ENCODE measurements at regions of chr18 and their contacts with region 1.

Region 1: GRCh38 chr18:7812431-7813063 is 245.4 kb downstream of the PTPRM start:
- DNase-seq: no peak
- ATAC-seq: peak; percentile 66 to 78 (median 72)
- H3K4me3 ChIP-seq: no peak overlapping the region
- H3K27ac ChIP-seq: peak overlapping the region in 9 of 12 donors; percentile 10 to 61 (median 46)
- H3K4me1 ChIP-seq: peaks cover 0 to 75% (median 35%) of the 10 kb centered on the region in 12 donors
- H3K27me3 ChIP-seq: no peaks in the 10 kb centered on the region
- CTCF ChIP-seq: no peak
- POLR2A ChIP-seq: no peak

Region 2: DNA sequence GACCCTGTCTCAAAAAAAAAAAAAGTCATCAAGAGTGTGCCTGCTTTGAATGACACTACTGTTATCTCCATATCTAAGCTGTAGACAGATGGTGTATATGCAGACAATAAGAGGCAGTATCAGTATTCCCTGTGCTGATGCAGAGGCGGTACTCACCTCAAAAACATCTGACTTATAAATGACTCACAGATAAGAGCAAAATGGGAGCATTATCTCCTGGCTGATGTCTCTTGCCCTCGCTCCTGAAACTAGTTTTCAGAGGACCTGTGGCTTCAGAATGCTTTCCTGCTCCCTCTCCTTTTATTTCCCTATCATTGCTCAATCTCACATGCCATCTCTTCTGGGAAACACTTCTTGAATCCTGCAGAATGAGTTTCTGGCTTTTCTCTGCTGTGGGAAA is 44.2 kb after region 1 on chr18:
- intact Hi-C with region 1: loop called in 1 of 10 experiments (anchors 5 kb)
- DNase-seq: no peak
- ATAC-seq: no peak
- H3K4me3 ChIP-seq: no peak overlapping the region
- H3K27ac ChIP-seq: peak overlapping the region in 3 of 12 donors; percentile 8 to 79 (median 53)
- H3K4me1 ChIP-seq: peaks cover 0 to 77% (median 30%) of the 10 kb centered on the region in 12 donors
- H3K27me3 ChIP-seq: no peaks in the 10 kb centered on the region
- CTCF ChIP-seq: no peak
- POLR2A ChIP-seq: no peak